CD8-positive, alpha-beta T cell (primary cell): ENCODE measurements at regions of chr5 and their contacts with region 1.

Region 1: DNA sequence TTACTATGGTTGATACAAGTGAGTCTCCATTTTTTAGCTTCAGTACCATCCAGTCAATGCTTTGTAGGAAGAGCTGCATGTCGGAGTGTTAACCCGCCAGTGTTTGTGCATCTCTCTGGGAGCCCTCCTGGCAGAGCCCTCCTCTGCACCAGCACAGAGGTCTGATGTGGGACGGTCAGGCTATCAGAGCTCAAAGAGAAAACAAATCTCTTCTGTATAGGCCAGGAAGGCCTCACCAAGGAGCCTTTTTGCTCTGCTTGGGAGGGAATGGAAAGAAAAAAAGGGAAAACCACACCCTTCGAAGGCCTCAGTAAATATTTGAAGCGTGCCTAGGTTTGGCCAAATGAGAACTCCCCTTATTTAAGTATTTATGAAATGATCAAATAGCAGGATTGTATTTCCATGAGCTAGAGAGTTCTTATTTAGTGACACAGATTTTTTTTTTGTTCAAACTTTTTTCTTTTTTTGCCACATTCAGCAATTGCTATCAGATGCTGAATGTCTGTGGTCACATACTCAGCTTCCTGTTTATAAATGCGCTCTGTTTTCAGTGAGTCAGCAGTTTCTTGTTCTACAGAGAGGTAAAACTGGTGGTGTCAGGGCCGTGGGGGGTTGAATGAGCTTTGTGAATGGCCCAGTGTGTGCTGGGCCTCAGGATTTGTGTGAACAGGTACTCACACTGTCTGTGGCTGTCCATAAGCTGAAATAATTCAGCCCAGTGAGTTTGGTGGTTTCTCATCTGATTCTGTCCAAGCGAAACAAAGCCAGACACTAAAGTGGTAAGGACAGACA is 226.6 kb downstream of the SNX18 start:
- DNase-seq: peak in 8 of 9 experiments; percentile 29 to 82 (median 62)
- ATAC-seq: peak; percentile 97
- H3K4me3 ChIP-seq: no peak overlapping the region
- H3K4me3 Mint-ChIP-seq: peak overlapping the region; percentile 17
- H3K27ac ChIP-seq: peak overlapping the region in 1 of 2 experiments; percentile 66
- H3K27ac Mint-ChIP-seq: peak overlapping the region; percentile 38
- H3K4me1 ChIP-seq: peaks cover 14% of the 10 kb centered on the region
- H3K4me1 Mint-ChIP-seq: peaks cover 22% of the 10 kb centered on the region
- H3K27me3 ChIP-seq: no peaks in the 10 kb centered on the region
- H3K27me3 Mint-ChIP-seq: no peaks in the 10 kb centered on the region
- CTCF ChIP-seq: no peak

Region 2: GRCh38 chr5:54646356-54647101 is 97.7 kb before region 1 on chr5:
- CTCF ChIA-PET with region 1: interaction called, 3 read pairs
- POLR2A ChIA-PET with region 1: interaction called, 12 read pairs
- intact Hi-C with region 1: loop called in 1 of 2 experiments (anchors 5 kb)
- DNase-seq: peak; percentile 33 to 90 (median 69)
- ATAC-seq: peak; percentile 78
- H3K4me3 ChIP-seq: peak overlapping the region; percentile 12 to 21
- H3K4me3 Mint-ChIP-seq: peak overlapping the region; percentile 71
- H3K27ac ChIP-seq: peak overlapping the region; percentile 42 to 70
- H3K27ac Mint-ChIP-seq: peak overlapping the region; percentile 95
- H3K4me1 ChIP-seq: peaks cover 49% of the 10 kb centered on the region
- H3K4me1 Mint-ChIP-seq: peaks cover 59% of the 10 kb centered on the region
- H3K27me3 ChIP-seq: no peaks in the 10 kb centered on the region
- H3K27me3 Mint-ChIP-seq: no peaks in the 10 kb centered on the region
- CTCF ChIP-seq: no peak

Region 3: GRCh38 chr5:54727874-54728587 is 16.2 kb before region 1 on chr5:
- CTCF ChIA-PET with region 1: interaction called, 3 read pairs
- POLR2A ChIA-PET with region 1: interaction called, 3 read pairs
- intact Hi-C with region 1: loop called in 1 of 2 experiments (anchors 2 kb)
- DNase-seq: no peak
- ATAC-seq: no peak
- H3K4me3 ChIP-seq: no peak overlapping the region
- H3K4me3 Mint-ChIP-seq: no peak overlapping the region
- H3K27ac ChIP-seq: no peak overlapping the region
- H3K27ac Mint-ChIP-seq: no peak overlapping the region
- H3K4me1 ChIP-seq: no peaks in the 10 kb centered on the region
- H3K4me1 Mint-ChIP-seq: peaks cover under 1% of the 10 kb centered on the region
- H3K27me3 ChIP-seq: no peaks in the 10 kb centered on the region
- H3K27me3 Mint-ChIP-seq: no peaks in the 10 kb centered on the region
- CTCF ChIP-seq: no peak

Region 4: DNA sequence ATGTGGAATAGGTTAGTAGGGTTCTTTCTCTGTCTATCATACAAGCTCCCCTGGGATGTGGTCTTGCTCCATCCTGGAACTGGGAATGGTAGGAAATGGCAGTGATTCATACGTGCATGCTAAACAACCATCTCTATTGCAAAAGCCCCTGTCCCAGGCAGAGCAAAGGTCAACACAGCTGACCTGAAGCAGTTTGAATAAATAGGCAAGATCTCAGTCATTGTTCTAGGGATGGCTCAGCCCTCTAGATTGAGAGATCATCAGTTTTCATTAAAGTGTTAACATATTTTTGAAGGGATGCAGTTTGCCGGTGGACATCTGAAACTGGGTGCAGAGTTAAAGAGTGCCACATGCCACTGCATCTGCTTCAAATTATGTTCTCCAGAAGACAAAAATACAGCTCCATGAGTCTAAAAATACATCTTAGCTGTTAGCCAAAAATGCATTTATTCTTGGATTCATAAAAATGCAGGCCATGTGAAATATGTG is 17.1 kb after region 1 on chr5:
- CTCF ChIA-PET with region 1: interaction called, 4 read pairs
- POLR2A ChIA-PET with region 1: interaction called, 3 read pairs
- intact Hi-C with region 1: loop called in 1 of 2 experiments (anchors 2 kb)
- DNase-seq: no peak
- ATAC-seq: no peak
- H3K4me3 ChIP-seq: no peak overlapping the region
- H3K4me3 Mint-ChIP-seq: no peak overlapping the region
- H3K27ac ChIP-seq: no peak overlapping the region
- H3K27ac Mint-ChIP-seq: no peak overlapping the region
- H3K4me1 ChIP-seq: peaks cover 7% of the 10 kb centered on the region
- H3K4me1 Mint-ChIP-seq: peaks cover 11% of the 10 kb centered on the region
- H3K27me3 ChIP-seq: no peaks in the 10 kb centered on the region
- H3K27me3 Mint-ChIP-seq: no peaks in the 10 kb centered on the region
- CTCF ChIP-seq: no peak

Region 5: DNA sequence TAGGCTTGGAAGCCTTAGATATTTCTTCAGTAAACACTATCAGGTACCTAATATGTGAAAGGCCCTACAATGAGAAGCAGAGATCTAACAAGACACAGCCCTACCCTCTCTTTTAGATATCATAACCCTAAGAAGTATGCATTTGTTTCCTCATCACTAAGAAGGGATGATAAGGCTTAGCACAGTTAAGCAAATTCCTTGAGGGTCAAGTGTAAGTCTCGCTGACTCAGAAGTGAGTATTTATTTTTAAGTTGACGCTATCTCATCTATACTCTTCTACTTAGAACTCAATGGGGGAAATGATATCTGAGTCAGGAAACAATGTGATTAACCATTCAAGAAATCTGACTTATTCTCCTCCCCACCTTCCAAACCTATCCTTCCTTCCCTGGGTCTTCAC is 91.5 kb after region 1 on chr5:
- CTCF ChIA-PET with region 1: no interaction called
- POLR2A ChIA-PET with region 1: no interaction called
- intact Hi-C with region 1: loop called (anchors 5 kb)
- DNase-seq: no peak
- ATAC-seq: no peak
- H3K4me3 ChIP-seq: no peak overlapping the region
- H3K4me3 Mint-ChIP-seq: no peak overlapping the region
- H3K27ac ChIP-seq: no peak overlapping the region
- H3K27ac Mint-ChIP-seq: no peak overlapping the region
- H3K4me1 ChIP-seq: no peaks in the 10 kb centered on the region
- H3K4me1 Mint-ChIP-seq: peaks cover 16% of the 10 kb centered on the region
- H3K27me3 ChIP-seq: no peaks in the 10 kb centered on the region
- H3K27me3 Mint-ChIP-seq: no peaks in the 10 kb centered on the region
- CTCF ChIP-seq: no peak

Region 6: DNA sequence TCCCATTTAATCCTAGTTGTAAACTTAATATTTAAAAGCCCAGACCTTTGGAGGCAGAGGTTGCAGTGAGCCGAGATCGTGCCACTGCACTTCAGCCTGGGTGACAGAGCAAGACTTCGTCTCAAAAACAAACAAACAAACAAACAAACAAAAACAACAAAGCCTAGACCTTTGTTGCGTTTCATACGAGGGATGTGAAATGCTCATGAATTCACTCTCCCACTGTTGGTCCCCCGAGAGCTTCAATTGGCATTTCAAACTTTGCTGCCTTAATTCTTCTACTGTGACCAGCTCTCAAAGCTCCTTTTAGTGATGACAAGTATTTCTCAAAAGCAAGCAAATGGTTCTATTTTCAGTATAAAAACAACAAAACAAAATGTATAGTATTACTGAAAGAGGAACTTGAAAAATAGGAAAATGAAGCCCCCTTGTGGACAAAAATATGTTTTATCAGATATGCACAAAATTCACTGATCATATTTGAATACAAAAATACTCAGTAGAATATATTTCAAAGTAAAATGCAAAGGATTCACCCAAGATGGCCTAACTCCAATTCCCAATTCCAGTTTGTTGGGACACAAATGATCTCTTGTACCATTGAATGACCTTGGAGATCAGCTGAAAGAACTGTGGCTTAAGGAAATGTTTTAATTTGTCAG is 100.8 kb after region 1 on chr5:
- CTCF ChIA-PET with region 1: interaction called, 3 read pairs
- POLR2A ChIA-PET with region 1: no interaction called
- intact Hi-C with region 1: loop called in 1 of 2 experiments (anchors 5 kb)
- DNase-seq: peak in 2 of 9 experiments; percentile 59 to 70
- ATAC-seq: no peak
- H3K4me3 ChIP-seq: no peak overlapping the region
- H3K4me3 Mint-ChIP-seq: peak overlapping the region; percentile 55
- H3K27ac ChIP-seq: no peak overlapping the region
- H3K27ac Mint-ChIP-seq: peak overlapping the region; percentile 15
- H3K4me1 ChIP-seq: peaks cover 3% of the 10 kb centered on the region
- H3K4me1 Mint-ChIP-seq: peaks cover 3% of the 10 kb centered on the region
- H3K27me3 ChIP-seq: no peaks in the 10 kb centered on the region
- H3K27me3 Mint-ChIP-seq: peaks cover 9% of the 10 kb centered on the region
- CTCF ChIP-seq: peak; percentile 78